Activated B cell treated with CpG ODN at 0.5 μM for 24 hours (primary cell): ENCODE measurements at regions of chrX and their contacts with region 1.

Region 1: GRCh38 chrX:55717521-55718497 is at the start of gene RRAGB:
- DNase-seq: peak; percentile 74
- ATAC-seq: peak; percentile 96
- H3K4me3 Mint-ChIP-seq: peak within 1 kb of the TSS; percentile 89
- H3K27ac Mint-ChIP-seq: peak within 1 kb of the TSS; percentile 93
- H3K4me1 Mint-ChIP-seq: peaks cover 28% of the 10 kb centered on the region
- H3K27me3 Mint-ChIP-seq: no peaks in the 10 kb centered on the region
- CTCF ChIP-seq: no peak
- total RNA-seq, gene RRAGB: 13.2 and 15.3 TPM in 2 replicates

Region 2: GRCh38 chrX:54439967-54440871 is 1277.6 kb before region 1 on chrX and contains the start of gene TSR2:
- CTCF ChIA-PET with region 1: no interaction called
- POLR2A ChIA-PET with region 1: no interaction called
- intact Hi-C with region 1: loop called (anchors 5 kb)
- DNase-seq: peak; percentile 59
- ATAC-seq: peak; percentile 98
- H3K4me3 Mint-ChIP-seq: peak within 1 kb of the TSS; percentile 91
- H3K27ac Mint-ChIP-seq: peak within 1 kb of the TSS; percentile 76
- H3K4me1 Mint-ChIP-seq: peaks cover 29% of the 10 kb centered on the region
- H3K27me3 Mint-ChIP-seq: no peaks in the 10 kb centered on the region
- CTCF ChIP-seq: no peak
- total RNA-seq, gene TSR2: 35.9 and 42.4 TPM in 2 replicates

Region 3: DNA sequence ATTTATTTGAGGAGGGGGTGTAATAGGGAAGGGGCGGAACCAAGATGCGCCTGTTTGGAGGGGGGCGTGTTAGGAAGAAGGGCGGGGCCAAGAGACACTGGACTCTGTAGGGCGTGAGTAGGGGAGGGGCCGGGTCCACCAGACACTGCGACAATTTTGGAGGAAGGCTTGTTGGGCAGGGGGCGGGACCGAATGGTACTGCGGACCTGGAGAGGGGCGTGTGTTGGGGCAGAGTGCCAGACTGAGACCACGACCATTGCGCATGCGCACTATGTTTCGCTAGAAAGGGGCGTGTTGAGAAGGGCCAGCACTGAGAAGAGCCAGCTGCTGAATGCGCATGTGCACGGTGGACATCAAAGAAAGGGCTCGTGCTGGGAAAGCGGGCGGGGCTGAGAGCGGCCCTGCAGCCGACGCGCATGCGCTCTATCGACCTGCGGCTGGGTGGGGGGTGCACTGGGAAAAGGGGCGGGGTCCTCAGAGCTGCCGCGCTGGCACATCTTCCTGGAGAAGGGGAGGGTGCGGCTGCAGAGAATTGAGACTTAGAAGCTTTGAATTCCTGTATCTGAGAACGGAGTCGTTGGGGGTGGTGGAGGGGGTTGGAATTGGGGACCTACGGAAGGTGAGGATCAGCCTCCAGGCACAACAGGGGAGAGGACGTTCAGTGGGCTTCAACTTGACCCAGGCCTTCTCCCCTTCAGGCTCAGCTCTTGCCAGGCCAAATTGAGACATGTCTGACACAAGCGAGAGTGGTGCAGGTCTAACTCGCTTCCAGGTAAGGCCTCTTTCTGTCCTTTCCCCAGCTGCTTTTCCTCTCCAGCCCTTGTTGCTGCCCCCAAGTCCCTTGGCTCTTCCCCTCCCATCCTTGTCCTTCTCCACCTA is 909.0 kb before region 1 on chrX:
- CTCF ChIA-PET with region 1: no interaction called
- POLR2A ChIA-PET with region 1: no interaction called
- intact Hi-C with region 1: loop called (anchors 1 kb)
- DNase-seq: peak; percentile 73
- ATAC-seq: peak; percentile 96
- H3K4me3 Mint-ChIP-seq: peak overlapping the region; percentile 92
- H3K27ac Mint-ChIP-seq: peak overlapping the region; percentile 91
- H3K4me1 Mint-ChIP-seq: peaks cover 14% of the 10 kb centered on the region
- H3K27me3 Mint-ChIP-seq: no peaks in the 10 kb centered on the region
- CTCF ChIP-seq: no peak

Region 4: DNA sequence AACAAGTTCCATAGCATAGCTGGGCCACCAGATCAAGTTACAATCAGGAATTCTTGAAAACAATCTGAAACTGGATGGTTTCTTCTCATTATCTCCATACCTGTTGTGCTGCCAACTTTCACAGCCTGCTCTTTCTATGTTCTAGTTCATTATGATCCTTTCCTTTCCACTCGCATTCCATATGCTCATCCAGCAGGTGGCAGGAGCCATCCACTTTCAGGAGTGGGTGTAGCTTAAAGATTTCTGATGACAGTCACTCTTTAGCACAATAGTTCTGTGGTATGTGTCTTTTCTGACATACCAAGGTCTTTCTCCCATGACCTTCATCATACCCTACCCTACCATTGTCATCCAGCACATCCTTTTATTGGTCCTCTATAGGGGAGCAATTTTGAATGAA is 582.6 kb before region 1 on chrX:
- CTCF ChIA-PET with region 1: interaction called, 5 read pairs
- POLR2A ChIA-PET with region 1: no interaction called
- intact Hi-C with region 1: loop called (anchors 1 kb)
- DNase-seq: peak; percentile 10
- ATAC-seq: peak; percentile 42
- H3K4me3 Mint-ChIP-seq: no peak overlapping the region
- H3K27ac Mint-ChIP-seq: no peak overlapping the region
- H3K4me1 Mint-ChIP-seq: no peaks in the 10 kb centered on the region
- H3K27me3 Mint-ChIP-seq: no peaks in the 10 kb centered on the region
- CTCF ChIP-seq: no peak

Region 5: DNA sequence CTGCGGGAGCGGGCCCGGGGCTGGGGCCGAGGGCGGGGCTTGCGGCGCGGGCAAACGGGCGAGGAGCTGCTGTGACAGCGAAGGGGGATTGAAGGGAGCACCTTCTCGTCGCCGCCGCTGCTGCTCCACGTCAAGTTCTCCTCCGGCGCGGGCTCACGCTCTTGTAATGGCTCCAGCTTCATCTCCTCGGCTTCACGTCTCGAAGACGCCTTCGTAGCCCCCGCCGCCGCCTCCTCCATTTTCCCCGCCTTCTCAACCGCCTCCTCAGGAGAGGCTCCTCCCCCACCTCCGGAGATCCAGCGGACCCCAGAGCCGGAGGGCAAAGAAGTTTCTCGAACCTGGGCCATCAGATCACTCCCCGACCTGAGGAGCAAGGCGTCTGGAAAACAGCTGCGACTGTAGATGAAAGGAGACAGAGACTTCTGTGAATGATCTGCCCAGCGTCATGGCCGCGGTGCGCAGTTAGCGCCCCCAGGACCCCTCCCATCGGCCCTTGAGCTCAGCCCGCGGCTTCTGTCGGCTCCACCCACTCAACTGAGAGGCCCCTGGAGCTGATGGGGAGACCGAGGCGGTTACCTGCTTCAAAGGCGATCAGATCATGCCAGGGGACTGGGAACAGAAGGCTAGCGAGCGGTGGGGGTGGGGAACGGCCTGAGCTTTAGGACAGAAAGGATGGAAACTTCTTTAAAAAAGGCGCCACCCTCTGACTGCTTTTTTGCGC is 229.1 kb before region 1 on chrX:
- CTCF ChIA-PET with region 1: interaction called, 9 read pairs
- POLR2A ChIA-PET with region 1: interaction called, 23 read pairs
- intact Hi-C with region 1: no loop called
- DNase-seq: peak; percentile 61
- ATAC-seq: peak; percentile 74
- H3K4me3 Mint-ChIP-seq: peak overlapping the region; percentile 94
- H3K27ac Mint-ChIP-seq: peak overlapping the region; percentile 98
- H3K4me1 Mint-ChIP-seq: peaks cover 17% of the 10 kb centered on the region
- H3K27me3 Mint-ChIP-seq: no peaks in the 10 kb centered on the region
- CTCF ChIP-seq: no peak

Region 6: GRCh38 chrX:55919367-55920221 is 201.8 kb after region 1 on chrX:
- CTCF ChIA-PET with region 1: no interaction called
- POLR2A ChIA-PET with region 1: interaction called, 10 read pairs
- intact Hi-C with region 1: loop called (anchors 1 kb)
- DNase-seq: peak; percentile 50
- ATAC-seq: peak; percentile 88
- H3K4me3 Mint-ChIP-seq: peak overlapping the region; percentile 52
- H3K27ac Mint-ChIP-seq: peak overlapping the region; percentile 79
- H3K4me1 Mint-ChIP-seq: peaks cover 38% of the 10 kb centered on the region
- H3K27me3 Mint-ChIP-seq: no peaks in the 10 kb centered on the region
- CTCF ChIP-seq: no peak

Region 7: DNA sequence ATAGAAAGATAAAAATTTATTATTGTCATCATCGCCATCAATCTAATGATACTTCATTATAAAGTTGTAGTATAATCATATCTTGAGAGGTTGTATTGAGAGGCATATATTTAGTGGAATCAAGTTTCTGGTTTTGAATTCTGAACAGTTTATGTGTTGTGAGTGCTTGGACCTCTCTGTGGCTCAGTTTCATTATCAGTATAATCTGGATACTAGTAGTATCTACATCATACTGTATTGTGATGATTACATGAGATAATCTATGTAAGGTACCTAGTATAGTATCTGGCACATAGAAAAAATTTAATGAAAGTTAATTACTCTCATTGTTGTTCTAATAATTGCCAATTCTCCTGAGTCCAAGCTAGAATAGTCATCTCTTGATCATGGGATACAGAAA is 684.4 kb after region 1 on chrX:
- CTCF ChIA-PET with region 1: no interaction called
- POLR2A ChIA-PET with region 1: no interaction called
- intact Hi-C with region 1: no loop called
- DNase-seq: no peak
- ATAC-seq: no peak
- H3K4me3 Mint-ChIP-seq: no peak overlapping the region
- H3K27ac Mint-ChIP-seq: no peak overlapping the region
- H3K4me1 Mint-ChIP-seq: no peaks in the 10 kb centered on the region
- H3K27me3 Mint-ChIP-seq: no peaks in the 10 kb centered on the region
- CTCF ChIP-seq: no peak

Region 8: DNA sequence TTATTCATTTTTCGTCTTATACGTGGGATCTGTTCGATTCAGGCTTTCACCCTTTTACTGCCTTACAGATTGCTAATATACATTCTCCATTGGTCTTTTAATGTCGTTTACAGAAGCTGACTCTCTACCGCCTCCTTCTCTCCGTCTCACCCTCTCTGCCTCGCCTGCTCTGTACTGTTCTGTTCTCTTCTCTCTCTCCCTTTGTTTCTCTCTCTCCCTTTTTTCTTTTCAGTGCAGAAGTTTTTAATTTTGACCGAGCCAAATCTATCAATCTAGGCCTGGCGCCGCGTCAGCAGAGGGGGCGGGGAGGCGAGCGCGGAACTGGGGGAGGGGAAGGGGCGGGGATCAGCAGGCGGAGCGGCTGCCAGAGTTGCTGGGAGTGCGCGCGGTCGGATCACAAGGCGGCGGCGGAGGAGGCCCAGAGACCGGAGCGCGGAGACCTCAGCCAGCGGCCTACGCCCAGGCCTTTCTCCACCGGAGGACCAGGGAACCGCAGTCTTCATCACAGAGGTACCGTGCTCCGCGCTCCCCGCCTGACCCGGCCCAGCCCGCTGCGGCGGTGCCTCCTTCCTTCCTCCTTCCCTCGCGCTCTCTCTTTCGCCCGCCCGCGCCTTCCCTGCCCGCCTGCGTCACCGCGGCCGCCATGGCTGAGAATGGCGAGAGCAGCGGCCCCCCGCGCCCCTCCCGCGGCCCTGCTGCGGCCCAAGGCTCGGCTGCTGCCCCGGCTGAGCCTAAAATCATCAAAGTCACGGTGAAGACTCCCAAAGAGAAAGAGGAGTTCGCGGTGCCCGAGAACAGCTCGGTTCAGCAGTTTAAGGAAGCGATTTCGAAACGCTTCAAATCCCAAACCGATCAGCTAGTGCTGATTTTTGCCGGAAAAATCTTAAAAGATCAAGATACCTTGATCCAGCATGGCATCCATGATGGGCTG is 845.7 kb after region 1 on chrX and contains the start of gene UBQLN2:
- CTCF ChIA-PET with region 1: no interaction called
- POLR2A ChIA-PET with region 1: no interaction called
- intact Hi-C with region 1: loop called (anchors 10 kb)
- DNase-seq: peak; percentile 61
- ATAC-seq: peak; percentile 87
- H3K4me3 Mint-ChIP-seq: peak within 1 kb of the TSS; percentile 88
- H3K27ac Mint-ChIP-seq: peak within 1 kb of the TSS; percentile 96
- H3K4me1 Mint-ChIP-seq: peaks cover 28% of the 10 kb centered on the region
- H3K27me3 Mint-ChIP-seq: no peaks in the 10 kb centered on the region
- CTCF ChIP-seq: no peak
- total RNA-seq, gene UBQLN2: 21.3 and 26.6 TPM in 2 replicates